WTC11 (cell line): ENCODE measurements at regions of chr17 and their contacts with region 1.

Region 1: GRCh38 chr17:45768000-45768399 is 16.1 kb upstream of the CRHR1 start:
- DNase-seq: peak; percentile 51
- ATAC-seq: peak; percentile 80
- H3K4me3 Mint-ChIP-seq: no peak overlapping the region
- H3K27ac Mint-ChIP-seq: no peak overlapping the region
- H3K4me1 Mint-ChIP-seq: peaks cover 27% of the 10 kb centered on the region
- H3K27me3 Mint-ChIP-seq: no peaks in the 10 kb centered on the region
- CTCF ChIP-seq: no peak

Region 2: GRCh38 chr17:45666046-45666600 is 101.9 kb before region 1 on chr17:
- CTCF ChIA-PET with region 1: interaction called, 16 read pairs
- POLR2A ChIA-PET with region 1: no interaction called
- DNase-seq: peak; percentile 26
- ATAC-seq: peak; percentile 50
- H3K4me3 Mint-ChIP-seq: no peak overlapping the region
- H3K27ac Mint-ChIP-seq: no peak overlapping the region
- H3K4me1 Mint-ChIP-seq: no peaks in the 10 kb centered on the region
- H3K27me3 Mint-ChIP-seq: no peaks in the 10 kb centered on the region; the same call in 1 of the 2 replicates
- CTCF ChIP-seq: no peak

Region 3: DNA sequence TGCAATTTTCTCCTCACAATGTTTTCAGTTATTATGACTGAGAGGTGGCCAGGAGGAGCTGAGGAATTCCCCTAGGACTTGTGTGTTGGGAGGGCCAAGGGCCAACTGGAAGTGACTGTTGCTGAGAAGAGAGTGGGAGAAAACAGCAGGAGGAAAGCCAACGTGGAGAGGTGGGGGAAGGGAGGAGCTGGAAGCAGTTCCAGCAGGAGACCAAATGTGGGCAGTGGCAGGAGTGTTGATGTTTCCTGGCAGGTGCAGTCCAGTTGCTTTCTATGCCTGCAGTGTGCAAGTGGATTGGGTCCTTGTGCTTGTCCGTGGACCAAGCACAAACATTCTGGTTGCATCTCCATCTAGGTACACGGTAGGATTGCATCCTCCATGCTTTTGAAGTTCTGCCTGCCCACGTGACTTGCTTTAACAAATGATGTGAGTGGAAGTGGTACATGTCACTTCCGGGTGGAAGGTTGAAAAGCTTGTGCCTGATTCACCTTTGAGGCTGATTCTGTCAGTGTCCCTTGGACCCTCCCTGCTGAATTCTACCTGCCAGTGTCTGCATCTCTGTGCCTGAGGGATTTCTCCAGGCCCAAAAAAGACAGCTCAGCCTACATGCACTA is 38.6 kb before region 1 on chr17:
- CTCF ChIA-PET with region 1: no interaction called
- POLR2A ChIA-PET with region 1: no interaction called
- DNase-seq: no peak
- ATAC-seq: no peak
- H3K4me3 Mint-ChIP-seq: no peak overlapping the region
- H3K27ac Mint-ChIP-seq: no peak overlapping the region
- H3K4me1 Mint-ChIP-seq: no peaks in the 10 kb centered on the region
- H3K27me3 Mint-ChIP-seq: peaks cover 75% of the 10 kb centered on the region
- CTCF ChIP-seq: no peak

Region 4: DNA sequence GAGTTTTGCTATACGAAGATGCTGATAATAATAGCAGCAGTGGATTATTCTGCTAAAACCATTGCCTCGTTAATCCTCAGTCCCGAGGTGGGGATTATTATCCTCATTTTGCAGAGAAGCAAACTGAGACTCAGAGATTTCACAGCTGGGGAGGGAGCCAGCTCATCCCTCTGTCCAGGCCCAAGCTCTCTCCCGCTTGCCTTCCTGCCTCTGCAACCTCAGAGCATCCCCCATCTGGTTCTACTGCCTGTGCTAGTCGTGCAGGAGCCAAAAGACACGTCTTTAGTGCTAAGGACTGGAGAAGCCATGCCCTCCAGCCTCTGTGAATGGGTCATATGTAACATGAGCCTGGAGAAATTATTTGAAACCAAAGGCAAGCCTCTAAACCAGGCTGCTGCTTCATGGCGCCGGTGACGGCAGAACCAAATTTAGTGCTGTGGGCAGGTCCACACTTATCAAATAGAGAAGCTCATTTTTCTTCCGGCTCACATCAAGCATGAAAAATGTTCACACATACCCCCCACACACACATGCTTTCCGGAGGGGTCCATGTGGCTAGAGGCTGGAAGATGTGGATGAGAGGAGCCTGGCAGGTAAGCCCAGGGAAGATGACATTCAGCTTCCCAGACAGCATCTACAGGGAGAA is 139.9 kb after region 1 on chr17:
- CTCF ChIA-PET with region 1: no interaction called
- POLR2A ChIA-PET with region 1: no interaction called
- DNase-seq: no peak
- ATAC-seq: no peak
- H3K4me3 Mint-ChIP-seq: no peak overlapping the region
- H3K27ac Mint-ChIP-seq: no peak overlapping the region
- H3K4me1 Mint-ChIP-seq: peaks cover 14% of the 10 kb centered on the region
- H3K27me3 Mint-ChIP-seq: peaks cover 6% of the 10 kb centered on the region
- CTCF ChIP-seq: no peak